Esophagus squamous epithelium (tissue), 5 donors: ENCODE measurements at regions of chr6 and their contacts with region 1.

Region 1: DNA sequence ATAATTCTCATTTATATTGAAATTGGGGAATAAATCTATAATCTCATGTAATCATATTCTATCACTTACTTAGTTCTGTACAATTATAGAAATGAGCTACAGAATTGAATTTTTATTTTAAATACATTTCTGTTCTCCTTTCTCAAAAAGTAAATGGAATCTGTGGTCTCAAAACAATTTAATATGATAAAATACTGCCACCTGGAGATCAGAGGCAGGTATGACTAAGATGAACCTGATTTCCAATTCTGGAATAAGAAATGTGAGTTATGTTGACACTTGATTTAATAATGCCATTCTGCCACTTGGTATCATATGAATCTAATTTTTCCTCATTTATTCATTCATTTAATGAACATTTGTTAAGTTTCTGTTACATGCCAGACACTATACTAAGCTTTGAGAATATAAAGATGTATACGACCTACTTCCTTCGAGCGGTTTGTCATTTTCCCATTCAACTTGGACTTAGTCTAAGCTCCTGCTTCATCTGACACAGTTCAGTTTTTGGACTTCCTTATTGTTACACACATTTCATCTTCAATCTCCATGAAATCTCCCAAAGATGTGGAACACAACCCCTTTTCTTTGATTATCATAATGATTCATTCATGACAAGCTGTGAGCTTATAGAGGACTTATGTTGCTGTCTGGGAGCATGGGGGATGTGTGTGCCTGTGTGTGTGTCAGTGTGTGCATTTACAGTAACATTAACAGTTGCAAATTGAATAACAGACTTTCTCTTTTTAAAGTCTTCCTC is 7.5 kb upstream of the CCDC28A start:
- DNase-seq: no peak
- H3K4me3 ChIP-seq: no peak overlapping the region
- H3K27ac ChIP-seq: no peak overlapping the region
- H3K4me1 ChIP-seq: no peaks in the 10 kb centered on the region
- H3K27me3 ChIP-seq: no peaks in the 10 kb centered on the region
- CTCF ChIP-seq: peak; percentile 27 to 83 (median 64)
- POLR2A ChIP-seq: no peak

Region 2: DNA sequence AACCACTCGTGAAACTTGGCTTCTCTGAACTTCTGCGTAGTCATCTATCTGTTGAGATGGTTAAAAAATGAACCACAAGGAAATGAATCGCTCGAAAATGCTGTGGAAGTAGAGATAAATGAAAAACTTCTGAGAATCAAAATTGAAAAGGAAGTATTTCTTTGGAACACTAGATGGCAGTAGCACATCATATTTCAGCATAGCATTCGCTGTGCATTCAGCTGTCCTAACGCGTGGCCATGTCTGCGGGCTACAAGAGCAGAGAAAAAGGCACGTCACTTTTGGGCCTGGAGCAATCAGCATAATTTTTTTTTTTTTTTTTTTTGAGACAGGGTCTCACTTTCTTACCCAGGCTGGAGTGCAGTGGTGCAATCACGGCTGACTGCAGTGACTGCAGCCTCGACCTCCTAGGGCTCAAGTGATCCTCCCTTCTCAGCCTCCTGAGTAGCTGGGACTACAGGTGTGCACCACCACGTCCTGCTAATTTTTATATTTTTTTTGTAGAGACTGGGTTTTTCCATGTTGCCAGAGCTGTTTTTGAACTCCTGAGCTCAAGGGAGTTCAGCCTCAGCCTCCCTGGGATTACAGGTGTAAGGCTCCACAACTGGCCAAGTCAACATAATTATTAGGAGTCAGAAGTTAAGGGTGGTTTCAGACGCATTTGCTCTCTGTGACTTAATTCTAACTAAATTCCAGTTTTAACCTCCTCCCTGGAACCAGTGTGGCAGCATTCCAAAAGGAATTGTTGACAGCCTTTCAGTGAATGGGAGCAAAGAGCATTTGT is 650.0 kb before region 1 on chr6:
- intact Hi-C with region 1: loop called (anchors 10 kb)
- DNase-seq: no peak
- H3K4me3 ChIP-seq: no peak overlapping the region
- H3K27ac ChIP-seq: no peak overlapping the region
- H3K4me1 ChIP-seq: peaks cover 0 to 8% (median 0%) of the 10 kb centered on the region in 3 donors
- H3K27me3 ChIP-seq: peaks cover 0 to 9% (median 0%) of the 10 kb centered on the region in 4 donors
- CTCF ChIP-seq: peak; percentile 61 to 85 (median 78)
- POLR2A ChIP-seq: no peak

Region 3: DNA sequence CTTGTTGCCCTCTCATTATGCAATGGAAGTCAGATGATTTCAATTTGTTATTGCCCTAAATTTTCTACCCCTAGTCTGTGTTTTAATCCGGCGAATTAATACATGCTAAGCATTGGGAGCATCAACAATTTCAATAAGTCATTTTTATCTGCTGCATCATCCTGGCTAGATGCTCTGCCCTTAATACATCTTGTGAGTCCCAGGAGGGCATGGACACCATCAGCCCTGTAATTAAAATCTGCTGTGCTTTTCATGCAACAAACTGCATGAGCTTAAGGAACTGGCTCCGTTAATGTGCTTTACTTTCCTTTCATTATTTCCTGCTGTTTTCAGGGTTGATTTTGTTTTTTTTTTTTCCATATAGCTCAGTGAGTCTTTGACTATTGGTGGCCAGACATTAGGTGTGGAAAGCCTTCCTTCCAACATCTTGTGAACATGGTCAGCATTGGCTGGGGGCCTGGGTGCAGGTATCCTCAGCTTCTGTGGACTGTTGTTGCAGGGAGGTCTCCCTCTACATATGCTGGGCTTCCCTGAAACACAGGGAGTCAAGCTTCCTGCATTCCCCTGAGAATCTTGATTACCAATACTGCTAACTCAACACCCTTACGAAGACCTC is 539.3 kb before region 1 on chr6:
- intact Hi-C with region 1: no loop called
- DNase-seq: no peak
- H3K4me3 ChIP-seq: no peak overlapping the region
- H3K27ac ChIP-seq: no peak overlapping the region
- H3K4me1 ChIP-seq: peaks cover 0 to 11% (median 5%) of the 10 kb centered on the region in 3 donors
- H3K27me3 ChIP-seq: no peaks in the 10 kb centered on the region
- CTCF ChIP-seq: no peak
- POLR2A ChIP-seq: no peak

Region 4: DNA sequence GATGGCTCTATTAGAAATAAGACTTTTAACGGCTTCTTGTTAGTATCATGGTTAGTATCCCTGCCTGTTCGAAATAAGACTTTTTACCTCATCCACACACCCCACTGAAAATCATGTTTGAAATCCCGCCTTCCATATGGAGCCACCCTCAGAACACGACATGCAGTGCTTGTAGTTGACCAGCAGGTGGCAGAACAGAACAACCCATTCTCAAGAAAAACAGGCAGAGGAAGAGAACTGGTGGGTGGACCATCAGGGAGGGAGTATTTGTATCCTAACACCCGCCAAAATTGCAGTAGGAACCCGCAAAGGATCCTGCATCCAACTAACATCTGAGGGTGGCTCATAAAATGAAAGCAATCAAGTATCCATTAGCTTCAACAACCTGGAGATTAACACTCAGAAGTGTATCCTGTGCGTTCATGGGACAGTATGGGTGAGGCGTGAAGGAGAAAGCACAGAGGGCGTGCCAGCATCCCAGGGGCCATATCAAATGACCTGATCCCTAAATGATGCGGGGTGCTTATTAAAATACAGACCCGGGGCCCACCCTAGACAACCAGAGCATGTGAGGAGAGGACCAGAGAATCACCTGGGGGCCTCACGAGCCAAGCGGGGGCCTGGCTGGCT is 177.2 kb before region 1 on chr6:
- intact Hi-C with region 1: loop called (anchors 5 kb)
- DNase-seq: no peak
- H3K4me3 ChIP-seq: no peak overlapping the region
- H3K27ac ChIP-seq: no peak overlapping the region
- H3K4me1 ChIP-seq: peaks cover 7 to 35% (median 7%) of the 10 kb centered on the region in 3 donors
- H3K27me3 ChIP-seq: no peaks in the 10 kb centered on the region
- CTCF ChIP-seq: peak; percentile 64 to 95 (median 93)
- POLR2A ChIP-seq: no peak

Region 5: GRCh38 chr6:138692058-138692977 is 73.8 kb before region 1 on chr6:
- intact Hi-C with region 1: loop called (anchors 10 kb)
- DNase-seq: no peak
- H3K4me3 ChIP-seq: peak overlapping the region; percentile 63 to 95 (median 88)
- H3K27ac ChIP-seq: peak overlapping the region; percentile 85 to 96 (median 94)
- H3K4me1 ChIP-seq: peaks cover 3 to 46% (median 24%) of the 10 kb centered on the region in 3 donors
- H3K27me3 ChIP-seq: no peaks in the 10 kb centered on the region
- CTCF ChIP-seq: peak; percentile 77 to 92 (median 86)
- POLR2A ChIP-seq: peak in 1 of 4 donors; percentile 4